ENCODE measurements at regions of chr19 and their contacts with region 1.

Region 1: GRCh38 chr19:18281082-18282020 is at the start of gene JUND:
- DNase-seq: peak; percentile 88
- ATAC-seq: peak; percentile 64
- H3K4me3 ChIP-seq: peak within 1 kb of the TSS; percentile 98
- H3K27ac ChIP-seq: peak within 1 kb of the TSS; percentile 100
- H3K4me1 ChIP-seq: peaks cover 31% of the 10 kb centered on the region
- H3K27me3 ChIP-seq: no peaks in the 10 kb centered on the region
- CTCF ChIP-seq: peak in 1 of 3 experiments; percentile 12; a peak in 1 of 6 replicates
- EP300 ChIP-seq: peak; percentile 69 to 97; a peak in 3 of 4 replicates
- POLR2A ChIP-seq: peak; percentile 99
- RAD21 ChIP-seq: no peak
- polyA plus RNA-seq, gene JUND: 11.2 to 16.0 TPM

Region 2: GRCh38 chr19:17966550-17967256 is 314.6 kb before region 1 on chr19 and contains the start of gene KCNN1:
- CTCF ChIA-PET with region 1: no interaction called
- POLR2A ChIA-PET with region 1: no interaction called
- RAD21 ChIA-PET with region 1: no interaction called
- SMC1A ChIA-PET with region 1: no interaction called
- in situ Hi-C with region 1: no loop called
- intact Hi-C with region 1: no loop called
- DNase-seq: no peak
- ATAC-seq: no peak
- H3K4me3 ChIP-seq: no peak within 1 kb of the TSS
- H3K27ac ChIP-seq: no peak within 1 kb of the TSS
- H3K4me1 ChIP-seq: no peaks in the 10 kb centered on the region
- H3K27me3 ChIP-seq: peaks cover 4 to 11% of the 10 kb centered on the region in 2 experiments
- CTCF ChIP-seq: no peak
- EP300 ChIP-seq: no peak
- POLR2A ChIP-seq: no peak
- RAD21 ChIP-seq: no peak
- polyA plus RNA-seq, gene KCNN1: 0.02 TPM in 1 of 2 experiments, not detected in the other

Region 3: DNA sequence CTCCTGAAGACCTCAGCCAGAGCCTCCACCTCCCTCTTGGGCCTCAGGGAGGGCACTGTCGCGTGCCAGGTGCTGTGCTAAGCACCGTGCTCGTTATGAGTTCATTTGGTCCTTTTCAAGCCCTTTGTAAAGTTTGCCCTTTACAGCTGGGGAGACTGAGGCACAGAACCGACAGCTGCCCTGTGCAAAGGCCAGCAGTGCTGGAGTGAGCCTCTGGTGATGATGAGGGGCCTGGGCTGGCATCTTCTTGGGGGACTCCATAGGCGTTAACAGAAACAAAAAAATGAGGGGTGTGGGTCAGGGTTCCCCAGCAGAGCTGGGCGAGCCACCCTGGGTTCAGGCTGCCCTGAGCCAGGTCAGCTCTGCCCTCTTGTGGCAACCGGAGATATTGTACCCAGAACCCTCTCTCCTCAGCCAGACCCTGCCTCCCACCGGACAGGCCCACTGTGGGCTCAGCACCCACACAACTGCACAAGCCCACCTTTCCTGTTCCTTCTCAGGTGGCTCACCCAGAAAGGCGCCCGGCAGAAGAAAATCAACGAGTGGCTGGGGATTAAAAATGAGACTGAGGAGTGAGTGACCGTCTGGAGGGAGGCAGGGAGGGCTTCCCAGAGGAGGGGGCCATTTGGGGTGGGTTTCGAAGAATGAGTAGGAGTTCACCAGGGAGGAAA is 113.2 kb before region 1 on chr19:
- CTCF ChIA-PET with region 1: interaction called, 5 read pairs
- POLR2A ChIA-PET with region 1: interaction called, 4 read pairs
- RAD21 ChIA-PET with region 1: interaction called, 11 read pairs
- SMC1A ChIA-PET with region 1: no interaction called
- in situ Hi-C with region 1: no loop called
- intact Hi-C with region 1: no loop called
- DNase-seq: no peak
- ATAC-seq: peak; percentile 65
- H3K4me3 ChIP-seq: no peak overlapping the region
- H3K27ac ChIP-seq: 0 out of 2 replicates have a peak overlapping the region, but pooled peaks have one; percentile 4
- H3K4me1 ChIP-seq: peaks cover 44% of the 10 kb centered on the region
- H3K27me3 ChIP-seq: no peaks in the 10 kb centered on the region
- CTCF ChIP-seq: peak; percentile 87 to 90 (median 87)
- EP300 ChIP-seq: no peak
- POLR2A ChIP-seq: no peak
- RAD21 ChIP-seq: peak; percentile 77

Region 4: GRCh38 chr19:18251587-18252369 is 29.6 kb before region 1 on chr19:
- CTCF ChIA-PET with region 1: interaction called, 32 read pairs
- POLR2A ChIA-PET with region 1: interaction called, 5 read pairs
- RAD21 ChIA-PET with region 1: interaction called, 13 read pairs
- SMC1A ChIA-PET with region 1: interaction called, 14 read pairs
- in situ Hi-C with region 1: no loop called
- intact Hi-C with region 1: no loop called
- DNase-seq: peak; percentile 40
- ATAC-seq: peak; percentile 92
- H3K4me3 ChIP-seq: no peak overlapping the region
- H3K27ac ChIP-seq: no peak overlapping the region
- H3K4me1 ChIP-seq: peaks cover 5% of the 10 kb centered on the region
- H3K27me3 ChIP-seq: no peaks in the 10 kb centered on the region; a peak in 1 of 4 replicates
- CTCF ChIP-seq: peak; percentile 90 to 97 (median 96)
- EP300 ChIP-seq: no peak
- POLR2A ChIP-seq: no peak
- RAD21 ChIP-seq: peak; percentile 94

Region 5: DNA sequence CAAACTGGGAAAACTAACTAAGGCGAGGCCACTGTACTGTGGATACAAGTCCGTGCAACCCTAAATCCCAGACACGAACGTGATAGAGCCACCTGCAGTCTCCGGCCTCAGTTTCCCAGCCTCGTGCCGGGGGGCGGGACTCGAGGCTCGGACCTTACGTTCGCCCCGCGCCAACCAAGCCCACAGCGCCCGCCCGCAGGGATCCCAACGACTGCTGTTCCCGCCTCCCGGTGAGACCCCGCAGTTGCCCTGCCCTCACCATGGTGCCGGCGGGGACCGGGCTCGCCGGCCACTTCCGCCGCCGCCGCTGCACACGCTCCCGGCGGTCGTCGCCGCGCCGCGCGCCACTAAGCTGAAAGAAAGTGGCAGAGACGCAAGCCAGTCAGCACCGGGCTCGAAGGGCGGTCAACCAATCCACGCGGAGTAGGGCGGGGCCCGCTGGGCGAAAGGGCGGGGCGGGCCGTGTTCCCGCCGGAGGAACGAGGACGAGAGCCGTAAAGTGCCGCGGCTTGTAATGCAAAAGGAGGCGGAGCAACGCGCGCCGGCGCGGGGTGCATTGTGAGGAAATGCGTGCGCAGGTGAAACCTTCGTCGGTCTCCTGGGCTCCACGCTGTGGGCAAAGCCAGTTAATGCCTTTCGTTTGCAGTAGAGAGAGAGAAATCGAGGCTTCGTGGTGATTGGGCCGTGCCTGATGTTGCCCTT is 41.6 kb after region 1 on chr19 and contains the start of gene LSM4:
- CTCF ChIA-PET with region 1: interaction called, 516 read pairs
- POLR2A ChIA-PET with region 1: interaction called, 206 read pairs
- RAD21 ChIA-PET with region 1: interaction called, 259 read pairs
- SMC1A ChIA-PET with region 1: interaction called, 176 read pairs
- in situ Hi-C with region 1: loop called (anchors 5 kb)
- intact Hi-C with region 1: loop called (anchors 1 kb)
- DNase-seq: peak; percentile 96
- ATAC-seq: peak; percentile 98
- H3K4me3 ChIP-seq: peak within 1 kb of the TSS; percentile 86
- H3K27ac ChIP-seq: peak within 1 kb of the TSS; percentile 90
- H3K4me1 ChIP-seq: peaks cover 32% of the 10 kb centered on the region
- H3K27me3 ChIP-seq: no peaks in the 10 kb centered on the region
- CTCF ChIP-seq: peak; percentile 55 to 66 (median 56)
- EP300 ChIP-seq: 0 out of 4 replicates have a peak, but pooled peaks of 1 of the 2 experiments have one; percentile 5
- POLR2A ChIP-seq: peak; percentile 94
- RAD21 ChIP-seq: peak; percentile 58
- polyA plus RNA-seq, gene LSM4: 12.6 to 38.2 TPM

Region 6: GRCh38 chr19:18349524-18350128 is 68.3 kb after region 1 on chr19:
- CTCF ChIA-PET with region 1: interaction called, 20 read pairs
- POLR2A ChIA-PET with region 1: no interaction called
- RAD21 ChIA-PET with region 1: interaction called, 5 read pairs
- SMC1A ChIA-PET with region 1: interaction called, 5 read pairs
- in situ Hi-C with region 1: no loop called
- intact Hi-C with region 1: loop called (anchors 5 kb)
- DNase-seq: no peak
- ATAC-seq: peak; percentile 80
- H3K4me3 ChIP-seq: no peak overlapping the region
- H3K27ac ChIP-seq: no peak overlapping the region
- H3K4me1 ChIP-seq: no peaks in the 10 kb centered on the region
- H3K27me3 ChIP-seq: no peaks in the 10 kb centered on the region
- CTCF ChIP-seq: peak; percentile 74 to 93 (median 80)
- EP300 ChIP-seq: no peak
- POLR2A ChIP-seq: no peak
- RAD21 ChIP-seq: peak; percentile 88

Region 7: GRCh38 chr19:18408053-18408476 is 126.7 kb after region 1 on chr19:
- CTCF ChIA-PET with region 1: interaction called, 88 read pairs
- POLR2A ChIA-PET with region 1: interaction called, 20 read pairs
- RAD21 ChIA-PET with region 1: interaction called, 20 read pairs
- SMC1A ChIA-PET with region 1: interaction called, 13 read pairs
- in situ Hi-C with region 1: loop called (anchors 5 kb)
- intact Hi-C with region 1: loop called (anchors 2 kb)
- DNase-seq: peak; percentile 87
- ATAC-seq: peak; percentile 95
- H3K4me3 ChIP-seq: no peak overlapping the region
- H3K27ac ChIP-seq: peak overlapping the region; percentile 37
- H3K4me1 ChIP-seq: peaks cover 14% of the 10 kb centered on the region
- H3K27me3 ChIP-seq: no peaks in the 10 kb centered on the region
- CTCF ChIP-seq: peak; percentile 56 to 60 (median 59)
- EP300 ChIP-seq: peak; percentile 73 to 82; a peak in 3 of 4 replicates
- POLR2A ChIP-seq: peak; percentile 68
- RAD21 ChIP-seq: peak; percentile 60